CD4-positive, alpha-beta T cell (primary cell): ENCODE measurements at regions of chr17 and their contacts with region 1.

Region 1: DNA sequence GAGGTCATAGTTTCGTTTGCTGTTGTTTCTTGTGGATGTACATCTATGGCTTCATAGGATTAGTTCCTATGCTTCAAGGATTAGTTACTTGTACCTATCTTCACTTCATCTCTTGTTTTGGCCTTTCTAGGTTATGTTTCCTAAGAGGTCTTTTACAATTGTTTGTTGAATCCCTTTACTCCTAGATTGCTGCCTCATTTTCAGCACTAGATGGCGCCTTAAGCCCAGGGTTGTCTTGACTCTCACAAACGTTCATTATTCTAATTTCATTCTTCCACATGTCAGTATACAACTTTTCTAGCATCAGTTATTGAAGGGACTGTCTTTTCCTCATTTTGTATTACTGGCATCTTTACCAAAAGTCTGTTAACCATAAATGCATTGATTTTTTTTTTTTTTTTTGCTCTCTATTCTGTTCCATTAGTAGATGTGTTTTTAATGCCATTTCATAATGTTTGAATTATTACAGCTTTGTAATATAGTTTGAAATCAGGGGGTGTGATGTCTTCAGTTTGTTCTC is 45.0 kb upstream of the NACA2 start:
- DNase-seq: peak in 13 of 14 experiments; percentile 6 to 72 (median 30)
- ATAC-seq: no peak
- H3K4me3 ChIP-seq: no peak overlapping the region
- H3K4me3 Mint-ChIP-seq: no peak overlapping the region
- H3K27ac ChIP-seq: no peak overlapping the region
- H3K27ac Mint-ChIP-seq: no peak overlapping the region
- H3K4me1 ChIP-seq: no peaks in the 10 kb centered on the region
- H3K4me1 Mint-ChIP-seq: no peaks in the 10 kb centered on the region
- H3K27me3 ChIP-seq: peaks cover 0 to 18% of the 10 kb centered on the region in 2 experiments
- H3K27me3 Mint-ChIP-seq: peaks cover 62% of the 10 kb centered on the region
- CTCF ChIP-seq: peak; percentile 46

Region 2: GRCh38 chr17:61689610-61690180 is 53.7 kb after region 1 on chr17:
- CTCF ChIA-PET with region 1: no interaction called
- POLR2A ChIA-PET with region 1: no interaction called
- intact Hi-C with region 1: loop called in 1 of 2 experiments (anchors 10 kb)
- DNase-seq: no peak
- ATAC-seq: no peak
- H3K4me3 ChIP-seq: no peak overlapping the region
- H3K4me3 Mint-ChIP-seq: no peak overlapping the region
- H3K27ac ChIP-seq: no peak overlapping the region
- H3K27ac Mint-ChIP-seq: no peak overlapping the region
- H3K4me1 ChIP-seq: no peaks in the 10 kb centered on the region
- H3K4me1 Mint-ChIP-seq: no peaks in the 10 kb centered on the region
- H3K27me3 ChIP-seq: no peaks in the 10 kb centered on the region
- H3K27me3 Mint-ChIP-seq: no peaks in the 10 kb centered on the region
- CTCF ChIP-seq: no peak

Region 3: DNA sequence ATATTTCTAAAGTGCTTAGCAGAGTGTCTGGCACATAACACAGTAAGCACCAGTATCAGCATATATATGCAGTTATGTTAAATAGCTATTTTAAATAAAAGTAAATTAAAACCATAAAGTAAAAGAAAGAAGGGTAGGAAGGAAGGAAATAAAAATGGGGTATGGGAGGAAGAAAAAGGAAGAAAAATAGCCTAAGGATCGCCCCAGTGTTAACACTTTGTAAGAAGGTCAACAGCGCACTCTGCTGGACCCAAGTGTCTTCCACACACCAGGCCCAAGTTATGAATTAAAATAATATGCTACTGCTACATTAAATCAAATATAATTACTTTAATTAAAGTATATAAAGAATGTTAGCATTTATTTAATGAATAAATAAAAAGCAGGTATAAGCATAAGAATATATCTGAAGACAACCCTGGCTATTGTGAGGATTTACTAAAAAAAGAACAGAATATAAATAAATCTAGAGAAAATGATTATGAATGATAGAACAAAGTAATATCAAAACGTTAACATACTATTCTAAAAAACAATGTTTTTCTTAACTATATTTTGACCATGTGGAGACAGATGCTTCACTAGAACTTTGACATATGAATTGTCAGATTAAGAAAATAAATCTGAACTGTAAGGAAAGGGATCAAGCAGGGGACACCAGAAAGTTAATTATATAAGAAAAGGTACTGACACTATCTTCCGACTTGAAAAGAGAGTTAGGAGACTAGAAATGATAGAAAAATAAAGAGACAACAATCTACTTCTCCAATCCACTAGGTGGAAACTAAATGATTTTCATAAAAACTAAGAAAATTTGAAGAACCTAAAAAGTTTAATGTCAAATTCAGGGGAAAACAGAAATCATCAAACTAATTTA is 201.4 kb after region 1 on chr17:
- CTCF ChIA-PET with region 1: interaction called, 4 read pairs
- POLR2A ChIA-PET with region 1: no interaction called
- intact Hi-C with region 1: loop called in 1 of 2 experiments (anchors 5 kb)
- DNase-seq: peak; percentile 9 to 74 (median 38)
- ATAC-seq: peak; percentile 43
- H3K4me3 ChIP-seq: no peak overlapping the region
- H3K4me3 Mint-ChIP-seq: no peak overlapping the region
- H3K27ac ChIP-seq: no peak overlapping the region
- H3K27ac Mint-ChIP-seq: no peak overlapping the region
- H3K4me1 ChIP-seq: no peaks in the 10 kb centered on the region
- H3K4me1 Mint-ChIP-seq: no peaks in the 10 kb centered on the region
- H3K27me3 ChIP-seq: no peaks in the 10 kb centered on the region
- H3K27me3 Mint-ChIP-seq: no peaks in the 10 kb centered on the region
- CTCF ChIP-seq: peak; percentile 65